ENCODE measurements at regions of chr17 and their contacts with region 1.

Region 1: DNA sequence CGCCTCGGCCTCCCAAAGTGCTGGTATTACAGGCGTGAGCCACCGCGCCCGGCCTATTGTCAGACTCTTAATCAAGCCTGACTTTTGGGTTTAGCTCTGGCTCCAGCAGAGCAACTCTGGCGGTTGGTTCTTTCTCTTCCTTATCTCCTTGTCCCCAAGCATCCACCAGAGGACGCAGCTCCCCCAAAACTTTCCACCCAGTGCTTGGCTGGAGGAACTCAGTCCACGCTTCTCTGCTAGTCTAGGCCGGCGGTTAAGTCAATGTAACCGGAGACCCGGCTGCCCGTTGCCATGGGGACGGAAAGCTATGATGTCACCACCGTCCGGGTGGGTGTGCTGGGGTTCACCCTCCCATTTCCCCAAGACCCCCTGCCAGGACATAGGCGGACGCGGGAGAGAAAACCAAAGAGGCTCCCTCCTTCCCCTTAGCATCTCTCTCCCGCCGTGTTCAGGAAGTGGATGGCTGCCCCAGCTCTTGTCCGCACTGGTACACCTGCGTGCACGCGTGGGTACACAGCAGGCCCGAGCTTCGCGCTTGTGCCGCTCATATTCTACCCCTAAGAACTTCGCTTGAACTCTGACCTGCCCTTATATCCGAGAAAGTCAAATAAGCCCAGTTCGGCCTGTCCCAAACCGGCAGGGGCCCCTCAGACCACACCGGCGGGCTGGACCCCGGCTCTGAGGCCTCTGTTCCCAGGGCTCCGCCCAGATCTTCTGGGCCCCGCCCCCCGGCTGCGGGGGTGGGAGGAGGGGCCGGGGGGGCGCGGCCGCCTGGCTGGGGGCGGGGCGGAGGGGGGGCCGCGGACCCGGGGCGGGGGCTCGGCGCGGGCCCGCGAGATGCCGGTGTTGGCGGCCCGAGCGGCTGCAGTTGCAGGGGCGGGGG is at the start of gene RND2:
- DNase-seq: peak; percentile 89
- total RNA-seq, gene RND2: 0.89 TPM

Region 2: GRCh38 chr17:43068570-43069367 is 44.1 kb after region 1 on chr17:
- intact Hi-C with region 1: no loop called
- DNase-seq: no peak

Region 3: DNA sequence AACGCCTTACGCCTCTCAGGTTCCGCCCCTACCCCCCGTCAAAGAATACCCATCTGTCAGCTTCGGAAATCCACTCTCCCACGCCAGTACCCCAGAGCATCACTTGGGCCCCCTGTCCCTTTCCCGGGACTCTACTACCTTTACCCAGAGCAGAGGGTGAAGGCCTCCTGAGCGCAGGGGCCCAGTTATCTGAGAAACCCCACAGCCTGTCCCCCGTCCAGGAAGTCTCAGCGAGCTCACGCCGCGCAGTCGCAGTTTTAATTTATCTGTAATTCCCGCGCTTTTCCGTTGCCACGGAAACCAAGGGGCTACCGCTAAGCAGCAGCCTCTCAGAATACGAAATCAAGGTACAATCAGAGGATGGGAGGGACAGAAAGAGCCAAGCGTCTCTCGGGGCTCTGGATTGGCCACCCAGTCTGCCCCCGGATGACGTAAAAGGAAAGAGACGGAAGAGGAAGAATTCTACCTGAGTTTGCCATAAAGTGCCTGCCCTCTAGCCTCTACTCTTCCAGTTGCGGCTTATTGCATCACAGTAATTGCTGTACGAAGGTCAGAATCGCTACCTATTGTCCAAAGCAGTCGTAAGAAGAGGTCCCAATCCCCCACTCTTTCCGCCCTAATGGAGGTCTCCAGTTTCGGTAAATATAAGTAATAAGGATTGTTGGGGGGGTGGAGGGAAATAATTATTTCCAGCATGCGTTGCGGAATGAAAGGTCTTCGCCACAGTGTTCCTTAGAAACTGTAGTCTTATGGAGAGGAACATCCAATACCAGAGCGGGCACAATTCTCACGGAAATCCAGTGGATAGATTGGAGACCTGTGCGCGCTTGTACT is 100.7 kb after region 1 on chr17 and contains the start of gene BRCA1:
- intact Hi-C with region 1: loop called (anchors 1 kb)
- DNase-seq: peak; percentile 94
- total RNA-seq, gene BRCA1: 6.1 TPM

Region 4: DNA sequence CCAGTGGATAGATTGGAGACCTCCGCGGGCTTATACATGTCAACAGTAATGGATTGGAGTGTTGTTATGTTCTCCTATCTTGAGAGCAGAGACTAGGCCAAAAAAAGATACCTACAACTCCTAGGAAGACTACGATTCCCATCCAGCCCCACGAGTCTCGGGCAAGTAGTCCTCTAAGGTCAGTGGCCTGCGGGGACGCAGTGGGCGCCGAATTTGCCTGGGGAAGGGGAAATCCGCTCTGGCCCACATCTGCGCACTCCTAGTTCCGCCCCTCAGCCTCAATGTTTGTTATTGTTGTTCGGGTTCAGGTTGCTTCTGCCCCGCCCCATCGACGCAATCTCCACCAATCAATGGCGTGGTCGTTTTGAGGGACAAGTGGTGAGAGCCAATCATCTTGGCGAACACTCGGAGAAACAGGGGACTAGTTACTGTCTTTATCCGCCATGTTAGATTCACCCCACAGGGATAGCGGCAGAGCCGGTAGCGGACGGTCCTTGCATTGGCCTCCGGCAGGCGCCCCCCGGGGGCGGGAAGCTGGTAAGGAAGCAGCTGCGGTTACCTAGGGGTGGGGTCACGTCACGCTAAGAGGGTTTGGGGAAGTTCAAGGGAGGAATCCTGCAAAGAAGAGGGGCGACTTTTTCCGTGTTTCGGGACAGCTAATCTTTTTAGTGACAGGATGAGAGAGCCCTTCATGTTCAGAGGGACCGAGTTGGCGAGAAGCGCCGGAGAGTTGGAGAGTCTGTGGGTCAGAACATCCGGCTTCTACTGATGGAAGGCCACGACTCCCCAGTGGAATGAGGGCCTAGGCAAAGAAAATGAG is 146.3 kb after region 1 on chr17 and contains the start of gene NBR1:
- intact Hi-C with region 1: loop called (anchors 5 kb)
- DNase-seq: peak; percentile 96
- total RNA-seq, gene NBR1: 97.6 TPM

Region 5: GRCh38 chr17:43338886-43339516 is 314.4 kb after region 1 on chr17:
- intact Hi-C with region 1: loop called (anchors 10 kb)
- DNase-seq: peak; percentile 85

Measured in cardiac septum (tissue), 1 donor.